H1 (cell line): ENCODE measurements at regions of chr9 and their contacts with region 1.

Region 1: GRCh38 chr9:6055213-6055612 is 39.8 kb upstream of the RANBP6 start:
- DNase-seq: no peak
- H3K4me3 ChIP-seq: no peak overlapping the region
- H3K27ac ChIP-seq: no peak overlapping the region
- H3K4me1 ChIP-seq: 0 out of 7 replicates have a peak, but pooled peaks cover 0 to 4% (median 0%) of the 10 kb centered on the region in 4 experiments
- H3K27me3 ChIP-seq: no peaks in the 10 kb centered on the region
- CTCF ChIP-seq: peak in 2 of 3 experiments; percentile 56 to 59; a peak in 3 of 4 replicates
- EP300 ChIP-seq: no peak
- POLR2A ChIP-seq: no peak
- RAD21 ChIP-seq: peak; percentile 92 to 95

Region 2: DNA sequence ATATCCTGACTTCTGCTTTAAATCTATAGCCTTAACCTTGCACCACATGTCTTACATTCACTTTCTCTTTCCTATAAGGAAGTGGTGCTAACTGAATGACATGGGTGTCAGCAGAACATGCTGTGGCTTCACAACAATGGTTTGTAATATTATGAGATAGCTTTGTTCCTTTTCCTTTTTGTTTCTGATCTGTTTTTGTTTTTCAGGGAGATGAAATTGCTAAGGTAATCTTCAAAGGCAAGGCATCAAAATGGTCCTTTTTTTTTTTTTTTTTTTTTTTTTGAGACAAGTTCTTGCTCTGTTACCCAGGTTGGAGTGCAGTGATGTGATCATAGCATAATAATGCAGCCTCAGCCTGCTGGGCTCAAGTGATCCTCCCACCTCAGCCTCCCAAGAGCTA is 13.8 kb after region 1 on chr9:
- CTCF ChIA-PET with region 1: interaction called, 12 read pairs
- POLR2A ChIA-PET with region 1: no interaction called
- DNase-seq: no peak
- H3K4me3 ChIP-seq: no peak overlapping the region
- H3K27ac ChIP-seq: no peak overlapping the region
- H3K4me1 ChIP-seq: no peaks in the 10 kb centered on the region
- H3K27me3 ChIP-seq: no peaks in the 10 kb centered on the region
- CTCF ChIP-seq: no peak
- EP300 ChIP-seq: no peak
- POLR2A ChIP-seq: no peak
- RAD21 ChIP-seq: no peak

Region 3: GRCh38 chr9:6090811-6091210 is 35.6 kb after region 1 on chr9:
- CTCF ChIA-PET with region 1: interaction called, 10 read pairs
- POLR2A ChIA-PET with region 1: no interaction called
- DNase-seq: no peak
- H3K4me3 ChIP-seq: no peak overlapping the region
- H3K27ac ChIP-seq: no peak overlapping the region
- H3K4me1 ChIP-seq: no peaks in the 10 kb centered on the region
- H3K27me3 ChIP-seq: no peaks in the 10 kb centered on the region
- CTCF ChIP-seq: no peak
- EP300 ChIP-seq: no peak
- POLR2A ChIP-seq: no peak
- RAD21 ChIP-seq: no peak

Region 4: GRCh38 chr9:6160579-6160978 is 105.4 kb after region 1 on chr9:
- CTCF ChIA-PET with region 1: no interaction called
- POLR2A ChIA-PET with region 1: no interaction called
- DNase-seq: no peak
- H3K4me3 ChIP-seq: no peak overlapping the region
- H3K27ac ChIP-seq: no peak overlapping the region
- H3K4me1 ChIP-seq: no peaks in the 10 kb centered on the region
- H3K27me3 ChIP-seq: no peaks in the 10 kb centered on the region
- CTCF ChIP-seq: no peak
- EP300 ChIP-seq: no peak
- POLR2A ChIP-seq: no peak
- RAD21 ChIP-seq: no peak

Region 5: DNA sequence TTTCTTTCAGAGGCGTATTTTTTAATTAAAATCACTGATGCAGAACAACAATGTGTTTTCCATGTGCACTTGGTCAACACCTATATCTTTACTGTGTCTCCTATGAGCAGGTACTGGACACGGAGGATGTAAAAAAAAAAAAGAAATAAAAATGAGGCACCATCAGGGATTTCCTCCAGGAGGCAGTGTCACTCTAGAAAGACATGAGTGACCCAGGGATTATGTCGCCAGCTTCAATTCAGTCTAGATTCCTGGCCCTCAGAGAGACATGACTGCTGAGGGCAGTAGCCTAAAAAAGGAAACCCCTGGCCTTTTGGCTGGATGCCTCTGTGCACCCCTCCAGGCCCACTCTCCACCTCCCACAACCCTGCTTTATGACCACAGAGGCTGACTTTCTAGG is 142.1 kb after region 1 on chr9:
- CTCF ChIA-PET with region 1: interaction called, 11 read pairs
- POLR2A ChIA-PET with region 1: no interaction called
- DNase-seq: no peak
- H3K4me3 ChIP-seq: no peak overlapping the region
- H3K27ac ChIP-seq: no peak overlapping the region
- H3K4me1 ChIP-seq: no peaks in the 10 kb centered on the region
- H3K27me3 ChIP-seq: no peaks in the 10 kb centered on the region; a peak in 1 of 7 replicates
- CTCF ChIP-seq: peak in 2 of 3 experiments; percentile 59 to 62; a peak in 3 of 4 replicates
- EP300 ChIP-seq: no peak
- POLR2A ChIP-seq: no peak
- RAD21 ChIP-seq: peak; percentile 80 to 81

Region 6: DNA sequence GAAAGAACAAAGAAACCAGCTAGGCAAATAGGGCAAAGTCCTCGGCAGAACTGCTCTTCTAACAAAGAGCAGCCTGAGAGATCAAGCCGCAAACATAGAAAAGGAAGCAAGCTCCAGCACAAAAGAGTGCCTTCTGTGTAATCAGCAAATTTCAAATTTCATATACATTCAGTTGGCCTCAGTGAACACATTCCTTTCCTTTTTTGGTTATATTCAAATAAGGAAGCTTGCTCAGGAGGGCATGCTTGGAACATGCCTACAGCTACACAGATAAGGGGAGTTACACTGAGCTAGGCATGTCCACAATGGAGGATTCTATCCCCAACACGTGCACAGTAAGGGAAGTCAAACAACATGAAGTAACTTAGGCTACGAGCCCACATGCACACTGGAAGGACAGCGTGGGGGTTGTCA is 183.8 kb after region 1 on chr9:
- CTCF ChIA-PET with region 1: no interaction called
- POLR2A ChIA-PET with region 1: no interaction called
- DNase-seq: no peak
- H3K4me3 ChIP-seq: no peak overlapping the region
- H3K27ac ChIP-seq: no peak overlapping the region
- H3K4me1 ChIP-seq: no peaks in the 10 kb centered on the region; a peak in 1 of 7 replicates
- H3K27me3 ChIP-seq: no peaks in the 10 kb centered on the region
- CTCF ChIP-seq: no peak
- EP300 ChIP-seq: no peak
- POLR2A ChIP-seq: no peak
- RAD21 ChIP-seq: no peak